Dorsolateral prefrontal cortex (tissue), 120 donors: ENCODE measurements at regions of chr1 and their contacts with region 1.

Region 1: DNA sequence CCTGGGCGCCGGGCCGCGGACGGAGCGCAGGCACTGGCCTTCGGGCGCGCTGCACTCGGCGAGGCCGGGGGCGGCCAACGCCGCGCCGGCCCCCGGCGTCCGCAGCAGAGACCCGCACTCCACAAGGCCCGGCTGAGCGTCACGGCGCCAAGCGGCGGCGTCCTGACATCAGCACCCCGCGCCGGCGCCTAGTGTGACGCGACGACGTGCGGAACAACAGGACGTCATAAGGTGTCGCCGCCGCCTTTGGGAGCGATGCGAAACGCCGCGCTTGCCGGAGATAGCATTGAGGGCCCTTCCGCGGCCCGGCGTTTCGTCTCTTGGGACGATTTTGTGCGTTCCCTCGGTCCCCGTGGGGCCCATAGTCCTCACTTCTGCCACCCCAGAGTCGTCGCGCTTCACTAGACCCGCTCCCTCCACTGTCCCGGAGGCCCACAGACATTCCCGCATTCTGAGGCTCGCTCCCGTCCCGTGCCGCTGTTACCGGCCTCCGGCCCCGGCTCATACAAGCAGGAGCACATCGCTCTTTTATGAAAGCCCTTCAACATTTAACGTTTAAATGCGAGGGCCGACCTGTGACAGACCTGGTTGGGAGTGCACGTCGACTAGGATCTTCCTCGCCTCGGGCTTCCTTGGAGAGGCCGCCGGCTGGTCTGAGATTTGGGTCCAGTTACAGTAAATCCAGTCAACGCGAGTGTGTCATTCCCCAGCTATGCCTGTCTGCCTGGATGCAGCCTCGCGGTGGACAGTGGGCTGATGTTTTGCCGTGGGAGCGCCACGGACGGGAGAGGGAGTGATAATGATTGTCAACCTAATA is at the start of gene SSU72:
- DNase-seq: peak; percentile 85 to 92 (median 90)
- H3K4me3 ChIP-seq: peak within 1 kb of the TSS; percentile 74 to 100 (median 98)
- H3K27ac ChIP-seq: peak within 1 kb of the TSS; percentile 70 to 99 (median 94)
- H3K27me3 ChIP-seq: no peaks in the 10 kb centered on the region
- CTCF ChIP-seq: peak in 6 of 56 donors; percentile 16 to 27 (median 18)
- total RNA-seq, gene SSU72: 79.2 to 139 (median 114) TPM

Region 2: DNA sequence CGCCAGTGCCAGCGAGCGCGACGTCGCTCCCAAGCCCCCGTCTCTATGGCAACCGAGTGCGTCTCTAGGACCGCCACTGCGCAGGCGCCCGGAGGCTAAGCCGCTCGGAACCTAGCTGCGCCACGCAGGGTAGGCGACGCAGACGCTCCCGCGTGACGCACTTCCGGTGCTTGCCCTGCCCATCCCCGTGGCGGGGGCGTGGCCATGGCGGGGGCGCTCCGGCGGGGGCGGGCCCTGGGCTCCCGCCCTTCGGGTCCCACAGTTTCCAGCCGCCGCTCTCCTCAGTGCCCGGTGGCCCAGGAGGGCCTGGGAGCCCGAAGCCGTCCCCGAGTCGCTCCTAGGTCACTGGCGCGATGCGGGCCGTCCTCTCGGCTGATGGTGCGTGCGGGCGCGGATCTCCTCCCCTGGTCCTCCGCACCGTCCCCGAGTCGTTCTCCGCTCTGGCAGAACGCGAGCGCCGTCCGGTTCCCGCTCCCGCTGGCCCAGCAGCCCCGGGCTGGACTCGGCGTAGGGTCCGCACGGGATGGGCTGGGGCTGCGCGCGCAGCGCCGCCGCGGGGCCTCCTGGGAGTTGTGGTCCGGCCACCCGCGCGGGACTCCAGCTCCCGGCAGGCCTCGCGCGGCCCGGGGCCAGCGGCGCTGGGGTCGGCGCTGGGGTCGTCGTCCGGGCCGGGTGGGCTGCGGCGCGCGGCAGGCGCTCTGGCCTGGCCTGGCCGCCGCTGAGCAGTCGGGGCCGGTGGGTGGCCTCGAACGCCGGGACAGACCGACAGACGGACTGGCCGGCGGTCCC is 40.5 kb after region 1 on chr1 and contains the start of gene MIB2:
- intact Hi-C with region 1: loop called (anchors 2 to 5 kb)
- DNase-seq: peak; percentile 94 to 99 (median 96)
- H3K4me3 ChIP-seq: peak within 1 kb of the TSS; percentile 69 to 100 (median 99)
- H3K27ac ChIP-seq: peak within 1 kb of the TSS; percentile 95 to 100 (median 100)
- H3K27me3 ChIP-seq: no peaks in the 10 kb centered on the region
- CTCF ChIP-seq: peak in 13 of 56 donors; percentile 9 to 36 (median 22)
- total RNA-seq, gene MIB2: 86.0 to 202 (median 127) TPM